BJ (cell line): ENCODE measurements at regions of chr12 and their contacts with region 1.

Region 1: GRCh38 chr12:121705514-121705913 is 7.0 kb upstream of the TMEM120B start:
- DNase-seq: no peak
- H3K4me3 ChIP-seq: no peak overlapping the region
- H3K27me3 ChIP-seq: no peaks in the 10 kb centered on the region
- CTCF ChIP-seq: no peak

Region 2: DNA sequence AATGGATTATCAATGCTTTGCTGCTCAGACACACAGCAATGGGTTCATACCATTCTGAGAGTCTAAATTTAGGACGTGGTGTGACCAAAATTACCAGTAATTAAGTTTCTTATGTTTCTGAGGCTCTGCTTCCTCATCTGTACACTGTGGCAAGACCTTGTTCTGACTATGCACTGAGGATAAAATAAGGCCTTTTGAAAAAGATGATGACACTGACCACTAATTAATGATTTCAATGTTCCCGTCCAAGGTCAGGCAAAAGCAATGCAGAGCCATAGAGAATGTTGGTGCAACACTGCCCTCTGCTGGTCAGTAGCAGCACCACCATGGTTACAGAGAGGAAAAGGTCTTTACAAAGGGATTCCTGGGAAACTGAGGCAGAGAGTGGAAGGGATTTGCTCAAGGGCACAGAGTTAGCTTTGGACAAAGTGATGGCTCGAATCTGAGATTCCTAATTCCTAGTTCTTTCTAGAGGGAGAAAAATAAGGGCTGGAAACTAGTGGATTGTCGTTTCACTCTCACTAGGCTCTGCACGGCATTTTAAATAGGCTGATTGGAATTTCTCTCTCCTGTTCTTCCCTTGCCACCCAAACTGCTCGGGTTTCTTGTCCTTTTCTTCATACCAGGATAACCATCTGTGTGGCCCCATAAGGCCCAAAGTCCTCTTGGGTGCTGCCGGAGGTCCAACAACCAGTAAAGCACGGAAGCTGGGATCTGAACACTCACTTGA is 595.1 kb before region 1 on chr12:
- CTCF ChIA-PET with region 1: no interaction called
- POLR2A ChIA-PET with region 1: no interaction called
- DNase-seq: no peak
- H3K4me3 ChIP-seq: no peak overlapping the region
- H3K27me3 ChIP-seq: no peaks in the 10 kb centered on the region
- CTCF ChIP-seq: peak; percentile 92

Region 3: GRCh38 chr12:121530600-121531355 is 174.7 kb before region 1 on chr12:
- CTCF ChIA-PET with region 1: no interaction called
- POLR2A ChIA-PET with region 1: no interaction called
- DNase-seq: peak; percentile 31
- H3K4me3 ChIP-seq: no peak overlapping the region
- H3K27me3 ChIP-seq: no peaks in the 10 kb centered on the region
- CTCF ChIP-seq: no peak

Region 4: DNA sequence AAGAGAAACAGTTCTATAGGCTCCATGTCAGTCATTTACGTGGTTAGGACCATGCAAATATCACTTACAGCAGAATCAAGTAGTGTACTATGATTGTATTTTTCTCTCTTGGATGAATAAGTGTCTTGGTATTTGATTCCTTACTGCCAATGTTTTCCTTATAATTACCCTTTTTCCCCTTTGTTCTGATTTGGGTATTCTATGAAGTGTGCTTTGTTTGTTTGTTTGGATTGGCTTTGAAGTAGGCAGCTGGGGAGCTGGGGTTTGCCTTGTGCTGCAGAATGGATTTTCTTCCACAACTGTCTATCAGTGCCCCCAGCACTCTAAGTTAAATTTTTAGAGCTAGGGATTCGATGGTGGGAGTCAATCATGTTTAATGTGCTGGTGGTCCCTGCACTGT is 19.4 kb after region 1 on chr12:
- CTCF ChIA-PET with region 1: no interaction called
- POLR2A ChIA-PET with region 1: no interaction called
- DNase-seq: no peak
- H3K4me3 ChIP-seq: no peak overlapping the region
- H3K27me3 ChIP-seq: no peaks in the 10 kb centered on the region
- CTCF ChIP-seq: no peak

Region 5: GRCh38 chr12:121773011-121773777 is 67.7 kb after region 1 on chr12:
- CTCF ChIA-PET with region 1: interaction called, 131 read pairs
- POLR2A ChIA-PET with region 1: no interaction called
- DNase-seq: no peak
- H3K4me3 ChIP-seq: no peak overlapping the region
- H3K27me3 ChIP-seq: no peaks in the 10 kb centered on the region
- CTCF ChIP-seq: peak; percentile 90

Region 6: DNA sequence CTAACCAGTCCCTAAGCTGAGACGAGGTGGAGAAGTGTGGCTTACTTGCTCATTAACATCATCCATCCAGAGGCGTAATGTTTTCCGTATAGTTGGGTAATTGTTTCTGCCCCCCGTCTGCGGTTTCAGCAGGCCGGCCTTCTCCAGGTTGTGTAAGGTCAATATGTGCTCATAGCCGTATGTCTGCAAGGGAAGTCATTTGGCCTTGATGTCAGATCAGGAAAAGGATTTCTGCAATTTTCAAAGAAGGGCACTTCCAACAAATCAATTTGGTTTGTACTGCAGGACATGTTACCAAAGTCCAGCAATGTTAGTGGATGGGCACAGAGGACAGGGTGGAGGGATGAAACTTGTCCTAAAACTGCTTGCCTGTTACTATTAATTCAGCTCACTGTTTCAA is 530.2 kb after region 1 on chr12:
- CTCF ChIA-PET with region 1: no interaction called
- POLR2A ChIA-PET with region 1: no interaction called
- DNase-seq: no peak
- H3K4me3 ChIP-seq: no peak overlapping the region
- H3K27me3 ChIP-seq: no peaks in the 10 kb centered on the region
- CTCF ChIP-seq: no peak